KBM-7 (cell line): ENCODE measurements at regions of chr2 and their contacts with region 1.

Region 1: GRCh38 chr2:64609227-64609941 is 44.3 kb downstream of the SERTAD2 start:
- DNase-seq: peak; percentile 53

Region 2: DNA sequence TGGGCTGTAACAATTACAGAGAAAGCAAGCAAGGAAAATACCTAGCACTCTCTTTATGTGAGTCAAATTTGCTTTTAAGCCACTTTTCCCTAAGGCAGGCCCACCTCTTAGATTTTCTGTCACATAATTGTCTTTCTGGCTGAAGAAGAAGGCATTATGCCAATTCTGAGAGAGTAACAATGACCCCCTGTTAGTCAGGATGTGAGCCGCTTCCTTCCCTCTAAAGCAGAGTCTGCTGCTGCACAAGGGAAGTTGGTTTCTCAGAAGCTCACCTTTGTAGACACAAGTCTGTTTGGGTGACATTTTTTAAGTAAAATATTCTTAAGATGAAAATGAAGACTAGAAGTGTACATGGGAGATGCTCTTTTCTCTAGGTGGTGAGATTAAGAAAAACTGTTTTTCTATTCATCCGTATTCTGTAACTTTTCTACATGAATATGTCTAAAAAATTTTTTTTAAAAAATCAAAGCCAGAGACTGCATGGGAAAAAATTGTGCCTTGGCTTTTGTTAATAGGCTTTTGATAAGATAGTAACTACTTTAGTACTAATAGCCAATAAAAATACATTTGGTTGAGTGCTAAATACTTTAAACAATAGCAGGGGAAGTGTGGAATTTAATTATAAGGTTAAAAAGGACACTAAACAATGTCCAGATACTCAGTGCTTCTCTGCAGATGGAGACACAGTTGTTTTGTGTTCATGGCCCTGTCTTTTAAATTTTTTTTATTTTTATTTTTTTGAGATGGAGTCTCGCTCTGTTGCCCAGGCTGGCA is 556.7 kb before region 1 on chr2:
- in situ Hi-C with region 1: no loop called
- DNase-seq: peak; percentile 41

Region 3: DNA sequence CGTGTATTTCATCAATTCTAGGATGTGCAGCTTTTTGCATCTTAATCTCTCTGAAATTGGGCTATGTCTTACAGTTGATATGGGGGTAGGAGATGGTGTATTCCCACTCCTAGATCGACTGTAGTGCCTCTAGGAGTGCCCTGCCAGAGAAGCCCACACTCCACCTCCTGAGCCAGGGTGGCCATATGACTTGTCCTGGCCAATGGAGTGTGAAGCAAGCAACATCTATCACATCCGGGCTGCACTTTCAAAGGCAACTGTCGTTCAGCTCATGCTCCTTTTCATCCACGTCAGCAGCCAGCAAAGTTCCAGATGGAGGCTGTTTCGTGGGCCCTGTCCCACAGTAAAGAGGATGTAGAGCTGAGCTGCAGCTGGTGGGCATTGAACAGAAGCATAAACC is 230.5 kb after region 1 on chr2:
- in situ Hi-C with region 1: no loop called
- DNase-seq: no peak

Region 4: DNA sequence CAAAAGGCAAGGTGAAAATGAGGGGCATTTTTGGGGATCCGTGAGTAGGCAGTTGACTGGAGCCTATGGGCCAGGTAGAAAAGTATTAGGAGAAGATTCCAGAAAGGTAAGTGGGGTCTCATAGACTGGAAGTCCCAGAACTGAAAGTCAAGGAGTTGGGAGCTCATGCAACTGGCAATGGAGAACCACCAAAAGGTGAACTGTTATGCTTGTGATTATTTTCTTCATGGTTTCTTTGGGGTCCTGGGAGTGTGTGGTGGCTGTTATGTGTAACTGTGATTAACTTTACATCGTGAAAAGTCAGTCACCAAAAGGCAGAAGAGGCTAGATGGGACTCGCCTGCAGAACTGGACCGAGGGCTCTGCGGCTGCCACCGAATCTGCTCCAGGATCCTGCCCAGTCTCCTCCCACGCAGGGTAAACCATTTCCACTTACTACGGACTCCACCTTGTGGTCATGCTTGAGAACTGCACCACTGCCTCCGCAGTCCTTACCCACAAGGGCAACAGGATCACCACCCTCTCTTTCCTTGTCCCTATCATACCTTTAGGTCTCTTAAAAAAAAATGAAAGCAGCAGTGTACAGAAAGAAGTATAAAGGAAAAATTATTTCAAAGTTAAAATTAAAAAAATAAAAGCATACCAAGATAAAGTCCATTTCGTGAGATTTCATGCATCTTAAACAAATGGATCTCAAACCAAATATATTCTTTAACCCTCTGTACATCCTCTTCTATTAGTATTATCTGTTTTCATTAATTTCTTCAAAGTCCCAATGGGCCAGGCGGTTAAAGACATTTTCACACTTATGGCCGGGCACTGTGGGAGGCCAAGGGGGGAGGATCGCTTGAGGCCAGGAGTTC is 431.2 kb after region 1 on chr2:
- in situ Hi-C with region 1: loop called (anchors 25 kb)
- DNase-seq: peak; percentile 84

Region 5: DNA sequence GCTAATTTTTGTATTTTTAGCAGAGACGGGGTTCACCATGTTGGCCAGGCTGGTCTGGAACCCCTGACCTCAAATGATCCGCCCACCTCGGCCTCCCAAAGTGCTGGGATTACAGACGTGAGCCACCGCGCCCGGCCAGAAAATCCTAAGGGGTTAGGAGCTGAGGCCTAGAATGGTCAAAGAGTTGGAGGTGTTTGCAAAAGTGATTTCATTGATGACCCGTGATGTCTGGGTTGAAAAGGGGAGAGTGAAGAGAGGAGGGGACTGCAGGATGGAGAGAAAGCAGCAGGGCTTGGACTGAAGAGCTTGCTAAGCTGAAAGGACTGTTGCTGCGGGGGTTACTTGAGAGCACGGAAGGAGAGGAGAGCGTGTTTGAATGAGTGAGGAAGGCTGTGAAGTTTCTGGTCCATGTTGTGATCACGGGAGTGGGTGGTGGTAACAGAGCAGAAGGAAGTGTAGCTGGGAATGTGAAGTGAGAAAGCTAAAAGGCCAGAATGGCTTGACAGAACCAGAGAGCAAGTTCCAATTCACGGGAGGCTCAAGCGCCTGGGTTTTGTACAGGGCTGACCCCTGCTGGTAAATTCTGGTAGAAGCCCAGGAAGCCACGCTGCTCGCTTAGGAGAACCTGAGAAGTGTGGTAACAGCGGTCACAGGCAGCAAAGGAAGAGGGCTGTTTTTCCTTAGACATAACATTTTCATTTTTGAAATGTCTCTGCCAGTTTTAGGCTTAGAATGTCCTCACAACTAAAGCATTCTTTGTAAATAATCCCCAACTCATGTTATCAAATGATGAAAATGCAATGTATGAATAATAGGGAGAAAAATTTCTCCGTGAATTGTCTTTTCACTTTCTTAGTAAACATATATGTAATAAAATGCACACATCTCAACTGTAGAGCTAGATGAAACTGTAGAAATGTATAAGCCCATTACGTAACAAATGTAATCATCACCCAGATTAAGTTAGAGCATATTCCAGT is 577.8 kb after region 1 on chr2:
- in situ Hi-C with region 1: no loop called
- DNase-seq: peak; percentile 89